Calu3 (cell line): ENCODE measurements at regions of chr7 and their contacts with region 1.

Region 1: DNA sequence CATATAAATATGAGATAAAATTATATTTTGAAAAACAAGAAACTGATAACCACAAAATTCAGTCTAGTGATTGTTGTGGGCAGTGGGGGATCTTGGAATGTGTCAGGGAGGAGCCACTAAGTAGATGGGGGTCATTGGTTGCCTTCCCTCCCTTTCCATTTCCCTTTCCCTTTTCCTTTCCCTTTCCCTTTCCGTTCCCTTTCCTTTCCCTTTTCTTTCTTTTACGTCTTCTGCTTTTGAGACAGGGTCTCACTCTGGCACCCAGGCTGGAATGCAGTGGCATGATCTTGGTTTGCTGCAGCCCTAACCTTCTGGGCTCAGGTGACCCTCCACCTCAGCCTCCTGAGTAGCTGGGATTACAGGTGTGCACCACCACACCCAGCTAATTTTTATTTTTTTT is 51.0 kb downstream of the DYNC2I1 start:
- DNase-seq: no peak
- H3K4me3 Mint-ChIP-seq: no peak overlapping the region
- H3K27ac Mint-ChIP-seq: no peak overlapping the region
- H3K4me1 Mint-ChIP-seq: no peaks in the 10 kb centered on the region
- H3K27me3 Mint-ChIP-seq: no peaks in the 10 kb centered on the region
- CTCF ChIP-seq: no peak

Region 2: DNA sequence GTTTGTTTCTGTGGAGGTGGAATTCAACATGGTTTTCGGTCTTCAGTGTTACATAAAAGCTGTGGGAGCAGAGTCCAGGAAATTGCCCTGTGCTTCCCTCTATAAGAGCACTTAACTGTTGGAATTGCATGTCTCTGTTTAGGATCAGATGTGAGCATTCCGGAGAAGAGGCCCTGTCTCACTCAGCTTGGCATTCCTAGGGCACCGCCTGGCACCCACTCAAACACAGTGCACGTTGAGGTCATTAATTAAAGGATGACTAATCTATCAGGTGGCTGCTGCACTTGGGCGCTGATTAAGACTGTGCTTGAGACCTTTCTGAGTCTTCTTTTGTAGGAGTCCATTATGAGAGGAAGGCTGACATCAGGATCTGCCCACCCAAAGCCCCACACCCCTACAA is 320.0 kb after region 1 on chr7:
- CTCF ChIA-PET with region 1: interaction called, 10 read pairs
- intact Hi-C with region 1: no loop called
- DNase-seq: no peak
- H3K4me3 Mint-ChIP-seq: no peak overlapping the region
- H3K27ac Mint-ChIP-seq: no peak overlapping the region
- H3K4me1 Mint-ChIP-seq: no peaks in the 10 kb centered on the region
- H3K27me3 Mint-ChIP-seq: no peaks in the 10 kb centered on the region
- CTCF ChIP-seq: no peak